ENCODE measurements at regions of chr10 and their contacts with region 1.

Region 1: GRCh38 chr10:95246579-95247051 is 44.2 kb downstream of the PDLIM1 start:
- DNase-seq: peak; percentile 59
- ATAC-seq: peak; percentile 86
- H3K4me3 Mint-ChIP-seq: no peak overlapping the region
- H3K27ac Mint-ChIP-seq: peak overlapping the region; percentile 61
- H3K4me1 Mint-ChIP-seq: peaks cover 25% of the 10 kb centered on the region
- H3K27me3 Mint-ChIP-seq: no peaks in the 10 kb centered on the region
- CTCF ChIP-seq: peak; percentile 26

Region 2: DNA sequence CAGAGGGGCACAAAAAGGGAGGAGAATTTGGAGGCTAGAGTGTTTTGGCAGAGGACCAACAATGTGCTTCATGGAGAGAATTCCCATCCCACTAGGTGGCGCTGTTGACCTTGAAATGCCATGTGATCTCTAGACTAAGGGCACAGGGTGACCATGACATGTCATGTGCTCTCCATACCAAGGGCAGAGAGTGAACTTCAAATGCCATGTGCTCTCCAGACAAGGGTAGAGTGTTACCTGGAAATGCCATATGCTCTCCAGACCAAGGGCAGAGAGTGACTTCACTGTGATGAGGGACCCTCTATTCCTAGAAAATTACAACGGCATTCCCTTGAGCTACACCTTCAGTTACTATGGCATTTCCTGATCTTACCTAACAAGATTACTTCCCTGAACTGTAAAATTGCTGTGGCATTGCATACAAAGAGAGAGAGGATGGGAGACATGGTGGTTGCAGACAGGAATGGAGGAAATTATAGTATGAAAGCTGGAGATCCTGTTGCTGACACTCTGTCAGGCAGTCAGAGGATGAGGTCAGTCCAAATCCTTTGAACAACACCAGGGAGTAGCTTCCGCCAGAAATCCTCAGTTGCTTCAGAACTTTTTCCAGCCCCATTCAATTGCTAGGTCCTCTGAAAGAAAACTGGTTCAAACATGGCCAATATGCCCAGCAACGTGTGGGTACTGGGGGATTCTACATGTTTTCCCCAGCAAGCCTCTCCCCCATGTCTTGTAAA is 113.4 kb before region 1 on chr10:
- CTCF ChIA-PET with region 1: interaction called, 20 read pairs
- POLR2A ChIA-PET with region 1: no interaction called
- intact Hi-C with region 1: loop called (anchors 1 kb)
- DNase-seq: peak; percentile 43
- ATAC-seq: peak; percentile 65
- H3K4me3 Mint-ChIP-seq: no peak overlapping the region
- H3K27ac Mint-ChIP-seq: no peak overlapping the region
- H3K4me1 Mint-ChIP-seq: no peaks in the 10 kb centered on the region
- H3K27me3 Mint-ChIP-seq: peaks cover 1% of the 10 kb centered on the region
- CTCF ChIP-seq: no peak

Region 3: DNA sequence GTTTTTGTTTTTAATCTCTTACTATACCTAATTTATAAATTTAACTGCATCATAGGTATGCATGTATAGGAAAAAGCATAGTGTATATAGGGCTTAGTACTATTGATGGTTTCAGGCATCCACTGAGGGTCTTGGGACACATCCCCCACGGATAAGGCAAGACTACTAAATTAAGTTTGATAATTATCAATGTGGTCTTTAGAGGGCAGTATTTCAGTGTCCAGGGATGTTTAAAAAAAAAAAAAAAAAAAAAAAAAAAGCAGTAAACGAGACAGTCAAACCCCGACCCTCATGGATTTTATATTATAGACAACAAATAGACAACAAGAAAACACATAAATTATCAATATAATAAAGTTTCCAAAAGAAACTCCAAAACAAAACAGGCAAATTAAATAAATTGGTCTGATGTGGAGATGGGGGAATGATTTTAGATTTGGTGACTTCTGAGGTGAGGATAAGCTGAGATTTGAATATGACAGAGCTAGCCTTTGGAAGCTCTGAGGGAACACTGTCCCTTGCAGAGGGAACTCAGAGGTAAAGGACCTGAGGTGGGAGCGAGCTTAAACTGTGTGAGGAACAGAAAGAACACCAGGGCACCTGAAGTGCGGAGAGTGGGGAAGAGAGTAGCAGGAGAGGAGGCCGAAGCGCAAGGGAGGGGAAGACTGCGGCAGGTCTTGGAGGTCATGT is 37.8 kb before region 1 on chr10:
- CTCF ChIA-PET with region 1: interaction called, 6 read pairs
- POLR2A ChIA-PET with region 1: no interaction called
- intact Hi-C with region 1: loop called (anchors 1 kb)
- DNase-seq: no peak
- ATAC-seq: no peak
- H3K4me3 Mint-ChIP-seq: no peak overlapping the region
- H3K27ac Mint-ChIP-seq: no peak overlapping the region
- H3K4me1 Mint-ChIP-seq: no peaks in the 10 kb centered on the region
- H3K27me3 Mint-ChIP-seq: no peaks in the 10 kb centered on the region
- CTCF ChIP-seq: no peak

Region 4: DNA sequence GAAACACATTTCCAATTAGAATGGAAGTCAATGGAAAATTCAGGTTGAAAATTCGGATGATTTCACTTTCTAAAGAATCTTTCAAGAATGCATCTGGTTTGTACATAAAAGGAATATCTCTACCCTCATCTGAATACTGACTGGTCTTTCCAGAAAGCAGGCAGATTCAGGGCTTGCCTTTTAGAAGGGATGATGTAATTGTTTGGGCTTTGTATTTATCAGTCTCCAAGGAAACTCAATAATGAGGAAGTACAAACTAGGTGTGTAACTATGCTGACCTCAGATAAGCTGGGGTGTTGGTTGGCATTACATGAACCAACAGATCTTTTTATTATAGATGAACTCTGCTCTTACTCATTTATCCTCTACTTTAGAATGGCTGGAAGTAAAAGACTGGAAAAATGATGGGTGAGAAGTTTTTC is 20.1 kb after region 1 on chr10:
- CTCF ChIA-PET with region 1: interaction called, 9 read pairs
- POLR2A ChIA-PET with region 1: no interaction called
- intact Hi-C with region 1: loop called (anchors 2 kb)
- DNase-seq: no peak
- ATAC-seq: peak; percentile 80
- H3K4me3 Mint-ChIP-seq: peak overlapping the region; percentile 2
- H3K27ac Mint-ChIP-seq: peak overlapping the region; percentile 83
- H3K4me1 Mint-ChIP-seq: peaks cover 56% of the 10 kb centered on the region
- H3K27me3 Mint-ChIP-seq: no peaks in the 10 kb centered on the region
- CTCF ChIP-seq: no peak

Region 5: DNA sequence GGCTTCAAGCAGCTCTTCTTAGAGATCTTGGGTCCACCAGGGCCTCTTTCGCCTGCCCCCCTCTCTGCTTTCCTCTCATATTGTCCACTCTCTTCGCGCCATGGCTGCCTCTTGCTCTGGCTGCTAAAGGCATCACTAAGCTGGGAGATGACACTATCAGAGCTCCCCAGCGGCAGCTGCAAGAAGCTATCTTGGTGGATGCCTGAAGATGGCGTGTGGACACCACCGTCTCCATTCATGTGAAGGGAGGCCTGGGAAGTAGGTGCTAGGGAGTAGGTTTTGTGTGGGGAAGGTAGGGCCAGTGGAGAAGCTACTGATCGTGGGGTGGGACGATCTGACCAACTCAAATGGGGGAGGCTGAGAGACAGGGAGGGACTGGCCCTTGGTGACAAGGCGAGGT is 90.1 kb after region 1 on chr10:
- CTCF ChIA-PET with region 1: no interaction called
- POLR2A ChIA-PET with region 1: no interaction called
- intact Hi-C with region 1: no loop called
- DNase-seq: no peak
- ATAC-seq: no peak
- H3K4me3 Mint-ChIP-seq: no peak overlapping the region
- H3K27ac Mint-ChIP-seq: no peak overlapping the region
- H3K4me1 Mint-ChIP-seq: no peaks in the 10 kb centered on the region
- H3K27me3 Mint-ChIP-seq: no peaks in the 10 kb centered on the region
- CTCF ChIP-seq: no peak

Region 6: DNA sequence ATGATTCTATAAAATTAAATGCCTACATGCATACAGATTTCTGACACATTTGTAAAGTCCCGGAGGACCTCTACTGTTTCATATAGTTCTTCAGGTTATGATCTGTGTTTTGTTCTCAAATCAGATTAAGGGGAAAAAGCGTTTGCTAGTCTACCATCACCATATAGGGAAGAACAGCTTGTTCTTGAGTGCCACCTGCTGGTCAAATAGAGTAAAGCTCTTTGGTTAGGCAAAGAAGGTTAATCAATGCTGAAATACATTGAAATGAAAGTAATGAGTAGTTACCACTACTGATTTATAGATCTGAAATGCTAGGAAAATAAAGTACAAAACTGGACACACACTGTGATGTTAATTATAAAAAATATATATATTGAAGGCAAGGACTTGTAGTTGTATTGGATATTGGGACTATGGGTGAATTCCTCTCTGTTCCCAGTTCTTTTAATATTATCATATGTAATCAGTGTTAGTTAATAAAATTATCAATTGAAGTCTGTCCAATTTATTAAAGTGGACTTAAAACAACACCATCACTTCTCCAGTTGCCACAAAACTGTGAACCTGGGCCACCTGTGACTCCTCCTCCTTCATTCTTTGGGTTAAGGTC is 116.8 kb after region 1 on chr10:
- CTCF ChIA-PET with region 1: interaction called, 338 read pairs
- POLR2A ChIA-PET with region 1: interaction called, 12 read pairs
- intact Hi-C with region 1: loop called (anchors 1 kb)
- DNase-seq: no peak
- ATAC-seq: peak; percentile 85
- H3K4me3 Mint-ChIP-seq: no peak overlapping the region
- H3K27ac Mint-ChIP-seq: no peak overlapping the region
- H3K4me1 Mint-ChIP-seq: peaks cover 2% of the 10 kb centered on the region
- H3K27me3 Mint-ChIP-seq: no peaks in the 10 kb centered on the region
- CTCF ChIP-seq: no peak

Region 7: DNA sequence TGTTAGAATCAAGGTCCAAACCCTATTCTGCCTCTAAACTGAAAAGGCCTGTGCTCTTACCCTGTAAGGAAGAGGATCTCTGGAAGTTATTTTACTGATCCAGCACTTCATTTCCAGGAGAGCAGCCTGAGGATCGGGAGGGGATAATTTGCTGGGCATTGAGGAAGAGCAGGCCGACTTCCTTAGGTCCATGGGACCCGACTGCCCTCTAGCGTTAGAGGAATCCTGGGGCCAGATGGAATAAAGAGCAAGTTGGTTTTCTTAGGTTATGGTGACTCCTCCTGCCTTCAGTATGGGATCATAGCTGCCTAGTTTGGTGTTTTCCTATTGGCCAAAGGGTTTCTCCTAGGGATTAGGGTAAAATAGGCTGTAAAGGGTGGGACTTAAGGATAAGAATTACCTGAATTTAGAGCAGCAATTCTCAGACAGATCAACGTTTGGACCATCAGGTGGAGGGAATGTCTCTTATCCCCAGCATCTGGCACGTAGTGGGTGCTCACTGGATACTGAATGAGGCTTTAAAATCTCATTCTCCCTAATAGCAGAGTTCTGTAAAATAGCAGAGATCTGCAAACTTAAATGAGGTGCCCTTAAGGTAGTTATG is 354.6 kb after region 1 on chr10:
- CTCF ChIA-PET with region 1: no interaction called
- POLR2A ChIA-PET with region 1: no interaction called
- intact Hi-C with region 1: loop called (anchors 10 kb)
- DNase-seq: no peak
- ATAC-seq: no peak
- H3K4me3 Mint-ChIP-seq: no peak overlapping the region
- H3K27ac Mint-ChIP-seq: no peak overlapping the region
- H3K4me1 Mint-ChIP-seq: no peaks in the 10 kb centered on the region
- H3K27me3 Mint-ChIP-seq: peaks cover 1% of the 10 kb centered on the region
- CTCF ChIP-seq: no peak